ENCODE measurements at regions of chr12 and their contacts with region 1.

Region 1: DNA sequence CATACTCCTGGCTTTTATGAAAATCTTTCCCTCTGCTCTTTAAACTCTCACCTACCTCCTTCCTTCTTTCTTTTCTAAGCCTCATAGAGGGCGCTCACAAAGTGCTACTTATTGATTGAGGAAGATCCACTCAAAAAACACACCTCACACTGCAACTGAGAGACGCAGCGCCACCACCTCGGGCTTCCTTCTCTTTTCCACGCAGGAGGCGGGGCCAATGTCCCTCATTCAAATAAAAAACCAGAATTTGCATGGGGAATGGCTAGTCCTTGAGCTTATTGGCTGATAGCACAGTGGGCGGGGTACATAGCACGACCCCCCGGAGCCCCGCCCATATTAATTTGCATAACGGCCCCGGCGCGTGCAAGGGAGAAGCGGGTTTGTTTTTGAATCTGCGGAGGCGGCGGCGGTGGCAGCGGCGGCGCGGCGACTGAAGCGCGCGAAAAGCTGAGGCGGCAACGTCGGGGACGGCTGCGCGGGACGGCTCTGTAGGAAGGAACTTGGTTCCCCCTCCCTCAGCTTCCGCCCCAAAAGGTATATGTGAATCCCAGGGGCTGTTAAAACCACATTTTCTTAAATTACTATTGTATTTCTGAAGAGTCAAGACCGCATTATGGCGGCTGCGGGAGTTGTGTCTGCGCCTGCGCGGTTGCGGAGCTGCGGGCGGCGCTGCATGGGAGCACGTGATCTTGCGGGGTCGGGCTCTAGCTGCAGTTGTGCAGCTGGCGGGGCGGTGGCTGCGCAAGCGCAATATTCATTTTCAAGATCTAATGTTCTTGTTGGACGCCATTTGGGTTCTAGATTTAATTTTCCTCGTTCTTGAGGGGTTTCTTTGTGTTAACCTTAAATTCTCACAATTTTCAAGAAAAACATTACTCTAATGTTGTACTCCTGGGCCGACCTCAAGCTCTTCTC is at the start of gene ATF7IP:
- DNase-seq: peak; percentile 95
- H3K4me3 Mint-ChIP-seq: peak within 1 kb of the TSS; percentile 53
- H3K27ac Mint-ChIP-seq: peak within 1 kb of the TSS; percentile 29
- H3K4me1 Mint-ChIP-seq: no peaks in the 10 kb centered on the region
- H3K27me3 Mint-ChIP-seq: no peaks in the 10 kb centered on the region
- CTCF ChIP-seq: no peak
- total RNA-seq, gene ATF7IP: 72.7 and 89.0 TPM in 2 replicates

Region 2: GRCh38 chr12:13576935-13577500 is 788.5 kb before region 1 on chr12:
- CTCF ChIA-PET with region 1: no interaction called
- intact Hi-C with region 1: no loop called
- DNase-seq: no peak
- H3K4me3 Mint-ChIP-seq: no peak overlapping the region
- H3K27ac Mint-ChIP-seq: no peak overlapping the region
- H3K4me1 Mint-ChIP-seq: peaks cover 7% of the 10 kb centered on the region
- H3K27me3 Mint-ChIP-seq: no peaks in the 10 kb centered on the region
- CTCF ChIP-seq: no peak

Region 3: GRCh38 chr12:14185427-14186192 is 179.9 kb before region 1 on chr12:
- CTCF ChIA-PET with region 1: no interaction called
- intact Hi-C with region 1: loop called (anchors 5 kb)
- DNase-seq: peak; percentile 47
- H3K4me3 Mint-ChIP-seq: no peak overlapping the region
- H3K27ac Mint-ChIP-seq: no peak overlapping the region
- H3K4me1 Mint-ChIP-seq: peaks cover 28% of the 10 kb centered on the region
- H3K27me3 Mint-ChIP-seq: no peaks in the 10 kb centered on the region
- CTCF ChIP-seq: peak; percentile 44

Region 4: GRCh38 chr12:14257734-14258574 is 107.6 kb before region 1 on chr12:
- CTCF ChIA-PET with region 1: interaction called, 21 read pairs
- intact Hi-C with region 1: loop called (anchors 1 kb)
- DNase-seq: peak; percentile 95
- H3K4me3 Mint-ChIP-seq: peak overlapping the region; percentile 24
- H3K27ac Mint-ChIP-seq: peak overlapping the region; percentile 95
- H3K4me1 Mint-ChIP-seq: peaks cover 64% of the 10 kb centered on the region
- H3K27me3 Mint-ChIP-seq: no peaks in the 10 kb centered on the region
- CTCF ChIP-seq: no peak

Region 5: DNA sequence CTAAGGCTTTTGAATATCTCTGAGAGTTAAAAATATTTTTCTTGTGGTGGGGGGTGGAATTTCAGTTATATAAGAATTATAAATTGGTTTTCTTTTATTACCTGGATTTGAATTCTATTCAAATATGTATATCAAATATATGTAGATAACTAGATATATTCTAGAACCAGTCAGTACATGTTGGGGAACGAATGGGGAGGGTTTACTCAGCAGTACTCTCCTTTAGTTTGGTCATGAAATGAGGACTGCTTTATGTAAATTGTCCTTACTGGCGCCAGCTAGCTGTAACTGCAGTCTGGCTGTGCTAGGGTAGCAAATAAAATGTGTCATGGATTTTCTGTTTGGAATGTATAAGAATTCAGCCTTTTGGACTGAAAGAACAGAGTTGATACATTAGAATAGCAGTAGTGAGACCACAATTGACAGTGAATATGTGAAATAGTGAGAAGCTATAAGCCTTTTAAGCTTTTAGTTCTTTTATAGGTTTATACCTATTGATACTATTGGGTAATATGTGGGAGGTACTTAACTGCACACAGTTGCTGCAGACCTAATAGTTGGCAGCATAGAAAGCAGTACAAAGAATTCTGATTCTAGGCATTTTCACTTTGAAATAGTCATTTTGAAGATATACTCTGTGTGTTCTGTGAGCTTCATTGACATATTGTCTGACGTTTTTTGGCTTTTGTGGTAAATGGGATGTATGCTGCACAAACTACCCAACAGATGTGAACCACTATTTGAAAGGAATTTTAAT is 28.9 kb after region 1 on chr12:
- CTCF ChIA-PET with region 1: interaction called, 3 read pairs
- intact Hi-C with region 1: loop called (anchors 2 kb)
- DNase-seq: peak; percentile 29
- H3K4me3 Mint-ChIP-seq: peak overlapping the region; percentile 12
- H3K27ac Mint-ChIP-seq: peak overlapping the region; percentile 63
- H3K4me1 Mint-ChIP-seq: peaks cover 32% of the 10 kb centered on the region
- H3K27me3 Mint-ChIP-seq: no peaks in the 10 kb centered on the region
- CTCF ChIP-seq: no peak

Region 6: DNA sequence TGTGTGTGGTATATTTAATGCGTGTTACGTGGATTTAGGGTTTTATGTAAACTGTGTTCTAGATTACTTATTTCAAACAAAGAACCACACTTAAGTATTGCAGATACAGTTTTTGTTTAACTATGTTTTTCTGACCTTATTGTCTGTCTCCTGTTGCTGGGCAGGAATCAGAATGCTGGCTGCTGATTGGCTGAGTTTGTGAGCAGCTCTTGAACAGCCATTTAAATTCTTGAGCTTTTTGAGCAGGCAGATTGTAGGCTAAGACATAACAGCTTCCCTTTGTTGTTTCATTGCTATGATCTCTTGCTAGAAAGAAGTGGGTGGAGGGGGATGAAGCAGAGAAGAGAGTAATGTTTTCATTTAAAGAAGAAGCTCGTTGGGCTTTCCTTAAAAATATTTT is 52.2 kb after region 1 on chr12:
- CTCF ChIA-PET with region 1: interaction called, 13 read pairs
- intact Hi-C with region 1: loop called (anchors 2 kb)
- DNase-seq: peak; percentile 70
- H3K4me3 Mint-ChIP-seq: peak overlapping the region; percentile 43
- H3K27ac Mint-ChIP-seq: peak overlapping the region; percentile 77
- H3K4me1 Mint-ChIP-seq: peaks cover 8% of the 10 kb centered on the region
- H3K27me3 Mint-ChIP-seq: no peaks in the 10 kb centered on the region
- CTCF ChIP-seq: no peak

Region 7: GRCh38 chr12:14473707-14474287 is 108.2 kb after region 1 on chr12:
- CTCF ChIA-PET with region 1: no interaction called
- intact Hi-C with region 1: no loop called
- DNase-seq: no peak
- H3K4me3 Mint-ChIP-seq: no peak overlapping the region
- H3K27ac Mint-ChIP-seq: no peak overlapping the region
- H3K4me1 Mint-ChIP-seq: no peaks in the 10 kb centered on the region
- H3K27me3 Mint-ChIP-seq: no peaks in the 10 kb centered on the region
- CTCF ChIP-seq: no peak

Measured in Calu3 (cell line).